Activated CD4-positive, alpha-beta T cell treated with anti-CD3 and anti-CD28 coated beads, Interleukin-2, amount 10 ng/mL, durations not matched to agents 7 days and 5 days (primary cell): ENCODE measurements at regions of chr14 and their contacts with region 1.

Region 1: DNA sequence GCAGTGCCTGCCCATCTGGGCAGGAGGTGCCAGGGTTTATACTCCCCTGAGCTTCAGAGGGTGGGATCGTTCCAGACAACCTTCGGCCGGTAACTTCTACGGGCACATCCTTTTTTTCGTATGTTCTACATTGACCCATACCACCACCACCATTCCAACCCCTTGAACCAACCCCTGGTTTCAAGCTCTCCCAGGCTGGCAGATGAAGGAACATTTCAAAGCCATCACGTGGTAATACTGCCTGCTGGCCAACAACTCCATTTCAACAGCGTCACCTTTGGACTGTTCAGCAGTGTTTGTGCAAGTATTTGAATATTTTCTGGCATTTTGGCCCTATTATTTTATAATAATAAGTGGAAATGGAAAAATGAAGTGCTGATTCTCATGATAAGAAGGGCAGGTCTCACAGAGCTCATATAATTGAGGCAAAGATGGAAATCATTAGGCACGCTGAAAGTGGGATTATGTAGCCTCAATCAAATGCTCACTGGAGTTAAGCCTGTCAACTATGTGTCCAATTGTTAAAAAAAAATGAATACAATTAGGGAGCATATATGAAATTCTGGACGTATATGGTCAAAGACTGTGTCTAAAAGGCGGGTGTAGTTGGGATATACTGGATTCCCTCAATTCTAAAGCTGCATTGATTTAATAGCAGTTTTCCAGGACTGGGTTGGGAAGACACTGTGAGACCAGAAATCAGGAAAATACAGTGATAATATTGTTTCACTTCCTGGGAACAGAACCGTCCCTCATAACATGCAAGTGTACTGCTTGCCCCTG is 162.1 kb downstream of the ZFP36L1 start:
- DNase-seq: no peak
- H3K4me3 Mint-ChIP-seq: no peak overlapping the region
- H3K27ac Mint-ChIP-seq: no peak overlapping the region
- H3K4me1 Mint-ChIP-seq: peaks cover 18% of the 10 kb centered on the region
- H3K27me3 Mint-ChIP-seq: peaks cover 15% of the 10 kb centered on the region

Region 2: DNA sequence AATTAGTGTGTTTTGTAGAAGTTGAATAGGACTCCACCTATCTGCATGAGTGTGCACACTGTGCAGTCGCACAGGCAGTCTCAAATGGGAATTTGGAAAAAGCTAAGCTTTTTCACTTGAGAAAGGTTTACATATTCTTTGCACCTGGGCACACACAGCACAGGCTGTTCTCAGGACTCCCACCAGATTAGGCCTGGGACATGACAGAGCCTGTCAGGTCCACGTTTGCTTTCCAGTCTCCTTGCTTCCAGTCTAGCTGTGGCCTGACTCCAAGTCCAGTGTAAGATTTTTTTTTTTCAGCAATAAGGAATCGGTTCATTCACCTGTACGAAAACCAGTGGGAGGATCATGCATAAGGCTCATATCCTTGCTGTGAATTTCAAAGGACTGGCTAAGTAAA is 19.2 kb before region 1 on chr14:
- CTCF ChIA-PET with region 1: interaction called, 3 read pairs
- POLR2A ChIA-PET with region 1: interaction called, 10 read pairs
- DNase-seq: no peak
- H3K4me3 Mint-ChIP-seq: no peak overlapping the region
- H3K27ac Mint-ChIP-seq: no peak overlapping the region
- H3K4me1 Mint-ChIP-seq: peaks cover 15% of the 10 kb centered on the region
- H3K27me3 Mint-ChIP-seq: no peaks in the 10 kb centered on the region

Region 3: GRCh38 chr14:68695326-68695768 is 64.5 kb after region 1 on chr14:
- CTCF ChIA-PET with region 1: no interaction called
- POLR2A ChIA-PET with region 1: no interaction called
- DNase-seq: no peak
- H3K4me3 Mint-ChIP-seq: no peak overlapping the region
- H3K27ac Mint-ChIP-seq: no peak overlapping the region
- H3K4me1 Mint-ChIP-seq: peaks cover 10% of the 10 kb centered on the region
- H3K27me3 Mint-ChIP-seq: no peaks in the 10 kb centered on the region